SK-N-SH (cell line): ENCODE measurements at regions of chr16 and their contacts with region 1.

Region 1: DNA sequence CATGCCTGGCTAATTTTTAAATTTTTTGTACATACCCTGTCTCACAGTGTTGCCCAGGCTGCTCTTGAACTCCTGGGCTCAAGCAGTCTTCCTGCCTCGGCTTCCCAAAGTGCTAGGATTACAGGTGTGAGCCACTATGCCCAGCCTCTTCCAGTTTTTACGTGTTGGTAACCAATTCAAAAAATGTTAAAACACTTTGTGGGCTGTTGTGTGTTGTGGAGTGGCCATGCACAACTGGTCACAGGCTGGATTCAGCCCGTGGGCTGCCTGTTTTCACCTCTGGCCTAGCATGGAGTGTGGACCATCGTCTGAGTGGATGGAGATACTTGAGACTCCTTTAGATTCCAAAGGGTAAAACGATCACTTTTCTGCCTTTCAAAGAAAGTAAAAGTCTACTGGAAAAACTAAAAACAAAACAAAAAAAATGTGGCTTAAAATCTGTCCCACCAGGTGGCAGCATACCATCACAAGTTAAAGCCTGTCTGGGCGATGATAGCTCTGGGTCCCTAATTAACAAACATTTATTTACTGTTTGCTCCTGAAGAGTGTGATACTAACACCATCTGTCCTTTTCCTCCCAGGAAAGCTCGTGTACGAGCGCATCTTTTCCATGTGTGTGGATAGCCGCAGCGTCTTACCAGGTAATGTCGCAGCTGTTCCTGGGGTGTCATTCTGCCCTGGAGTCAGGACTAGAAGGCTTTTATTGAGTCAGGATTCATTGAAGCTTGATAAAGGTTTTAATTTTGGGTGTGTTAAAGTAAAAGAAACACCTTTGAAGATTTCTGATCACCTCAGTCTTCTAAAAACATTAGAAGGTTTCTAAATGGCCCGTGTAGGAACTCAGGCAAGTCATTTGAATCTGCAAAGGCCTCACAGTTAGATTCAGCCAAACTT is 45.8 kb downstream of the VPS35L start:
- DNase-seq: peak; percentile 47
- H3K4me3 ChIP-seq: peak overlapping the region in 1 of 2 experiments; percentile 25; a peak in 1 of 4 replicates
- H3K27ac ChIP-seq: no peak overlapping the region
- H3K4me1 ChIP-seq: no peaks in the 10 kb centered on the region
- H3K27me3 ChIP-seq: no peaks in the 10 kb centered on the region
- CTCF ChIP-seq: peak; percentile 75
- EP300 ChIP-seq: no peak
- RAD21 ChIP-seq: peak; percentile 82

Region 2: DNA sequence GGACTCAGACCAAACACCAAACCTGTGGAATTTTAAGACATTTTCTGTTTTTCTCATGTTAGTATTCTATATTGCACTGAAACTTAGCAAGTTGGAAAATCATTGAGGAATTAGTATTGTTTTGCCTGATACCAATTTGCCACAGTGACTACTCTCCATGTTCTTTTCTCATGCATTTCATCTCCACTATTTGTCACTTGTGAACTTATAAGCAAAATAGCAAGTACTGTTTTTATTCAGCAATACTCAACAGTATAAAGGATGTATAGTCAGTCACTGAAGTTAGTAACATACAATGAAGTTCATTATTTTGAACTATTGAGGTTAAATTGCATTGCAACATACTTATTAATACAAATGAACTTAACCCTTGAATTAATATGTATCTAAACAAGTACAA is 51.7 kb before region 1 on chr16:
- CTCF ChIA-PET with region 1: no interaction called
- POLR2A ChIA-PET with region 1: no interaction called
- DNase-seq: no peak
- H3K4me3 ChIP-seq: no peak overlapping the region
- H3K27ac ChIP-seq: no peak overlapping the region
- H3K4me1 ChIP-seq: no peaks in the 10 kb centered on the region; a peak in 1 of 4 replicates
- H3K27me3 ChIP-seq: no peaks in the 10 kb centered on the region
- CTCF ChIP-seq: no peak
- EP300 ChIP-seq: no peak
- RAD21 ChIP-seq: no peak

Region 3: GRCh38 chr16:19589771-19590302 is 11.5 kb before region 1 on chr16:
- CTCF ChIA-PET with region 1: interaction called, 27 read pairs
- POLR2A ChIA-PET with region 1: no interaction called
- DNase-seq: no peak
- H3K4me3 ChIP-seq: no peak overlapping the region
- H3K27ac ChIP-seq: no peak overlapping the region
- H3K4me1 ChIP-seq: peaks cover 0 to 1% of the 10 kb centered on the region in 2 experiments; a peak in 1 of 4 replicates
- H3K27me3 ChIP-seq: no peaks in the 10 kb centered on the region
- CTCF ChIP-seq: no peak
- EP300 ChIP-seq: no peak
- RAD21 ChIP-seq: no peak

Region 4: DNA sequence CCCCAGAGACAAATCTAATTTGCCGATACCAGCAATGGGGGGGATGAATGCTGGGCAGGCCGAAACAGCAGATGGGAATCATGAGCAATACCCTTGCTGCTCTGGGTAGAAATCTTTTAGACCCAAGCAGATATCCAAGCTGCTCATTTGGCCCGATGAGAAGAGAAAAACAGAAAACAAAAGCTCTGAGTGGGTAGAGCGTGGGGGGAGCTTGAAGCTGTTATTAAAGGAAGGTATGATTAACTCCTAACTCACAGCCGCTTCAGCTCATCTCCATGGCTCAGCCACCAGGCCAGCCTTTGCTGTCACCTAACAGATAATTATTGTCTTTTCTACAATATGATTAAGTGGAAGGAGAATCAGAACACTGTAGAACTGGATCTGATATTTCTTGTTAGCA is 12.5 kb after region 1 on chr16:
- CTCF ChIA-PET with region 1: interaction called, 29 read pairs
- POLR2A ChIA-PET with region 1: no interaction called
- DNase-seq: no peak
- H3K4me3 ChIP-seq: no peak overlapping the region
- H3K27ac ChIP-seq: no peak overlapping the region
- H3K4me1 ChIP-seq: no peaks in the 10 kb centered on the region
- H3K27me3 ChIP-seq: no peaks in the 10 kb centered on the region
- CTCF ChIP-seq: no peak
- EP300 ChIP-seq: no peak
- RAD21 ChIP-seq: no peak

Region 5: GRCh38 chr16:19745286-19746010 is 144.1 kb after region 1 on chr16:
- CTCF ChIA-PET with region 1: no interaction called
- POLR2A ChIA-PET with region 1: no interaction called
- DNase-seq: no peak
- H3K4me3 ChIP-seq: no peak overlapping the region
- H3K27ac ChIP-seq: no peak overlapping the region
- H3K4me1 ChIP-seq: peaks cover 0 to 14% of the 10 kb centered on the region in 2 experiments; a peak in 2 of 4 replicates
- H3K27me3 ChIP-seq: no peaks in the 10 kb centered on the region
- CTCF ChIP-seq: no peak
- EP300 ChIP-seq: no peak
- RAD21 ChIP-seq: no peak